A673 (cell line): ENCODE measurements at regions of chr2 and their contacts with region 1.

Region 1: GRCh38 chr2:25131567-25132298 is 36.6 kb downstream of the POMC start:
- DNase-seq: no peak
- H3K4me3 ChIP-seq: no peak overlapping the region
- H3K27ac ChIP-seq: no peak overlapping the region
- H3K4me1 ChIP-seq: no peaks in the 10 kb centered on the region
- H3K27me3 ChIP-seq: peaks cover 28% of the 10 kb centered on the region
- CTCF ChIP-seq: no peak

Region 2: GRCh38 chr2:24409700-24410556 is 721.8 kb before region 1 on chr2:
- CTCF ChIA-PET with region 1: interaction called, 16 read pairs
- POLR2A ChIA-PET with region 1: no interaction called
- intact Hi-C with region 1: loop called (anchors 2 kb)
- DNase-seq: peak; percentile 83
- H3K4me3 ChIP-seq: no peak overlapping the region
- H3K27ac ChIP-seq: no peak overlapping the region
- H3K4me1 ChIP-seq: peaks cover 3% of the 10 kb centered on the region
- H3K27me3 ChIP-seq: no peaks in the 10 kb centered on the region
- CTCF ChIP-seq: peak; percentile 87

Region 3: DNA sequence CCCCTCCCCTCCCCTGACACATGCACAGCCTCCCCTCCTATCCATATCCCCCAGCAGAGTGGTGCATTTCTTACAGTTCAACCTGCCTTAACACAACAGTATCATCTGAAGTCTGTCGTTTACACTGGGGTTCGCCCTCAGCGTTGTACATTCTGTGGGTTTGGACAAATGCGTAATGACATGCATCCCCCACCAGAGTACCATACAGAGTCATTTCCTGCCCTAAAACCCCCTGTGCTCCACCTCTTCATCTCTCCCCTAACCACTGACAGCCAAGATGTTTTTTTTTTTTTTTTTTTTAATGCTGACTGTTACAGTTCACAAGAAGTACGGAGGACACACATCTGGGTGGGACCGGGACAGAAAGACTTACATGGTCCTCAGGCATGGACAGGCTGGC is 14.1 kb after region 1 on chr2:
- CTCF ChIA-PET with region 1: no interaction called
- POLR2A ChIA-PET with region 1: interaction called, 16 read pairs
- intact Hi-C with region 1: no loop called
- DNase-seq: no peak
- H3K4me3 ChIP-seq: no peak overlapping the region
- H3K27ac ChIP-seq: no peak overlapping the region
- H3K4me1 ChIP-seq: no peaks in the 10 kb centered on the region
- H3K27me3 ChIP-seq: no peaks in the 10 kb centered on the region
- CTCF ChIP-seq: no peak